ENCODE measurements at regions of chr7 and their contacts with region 1.

Region 1: DNA sequence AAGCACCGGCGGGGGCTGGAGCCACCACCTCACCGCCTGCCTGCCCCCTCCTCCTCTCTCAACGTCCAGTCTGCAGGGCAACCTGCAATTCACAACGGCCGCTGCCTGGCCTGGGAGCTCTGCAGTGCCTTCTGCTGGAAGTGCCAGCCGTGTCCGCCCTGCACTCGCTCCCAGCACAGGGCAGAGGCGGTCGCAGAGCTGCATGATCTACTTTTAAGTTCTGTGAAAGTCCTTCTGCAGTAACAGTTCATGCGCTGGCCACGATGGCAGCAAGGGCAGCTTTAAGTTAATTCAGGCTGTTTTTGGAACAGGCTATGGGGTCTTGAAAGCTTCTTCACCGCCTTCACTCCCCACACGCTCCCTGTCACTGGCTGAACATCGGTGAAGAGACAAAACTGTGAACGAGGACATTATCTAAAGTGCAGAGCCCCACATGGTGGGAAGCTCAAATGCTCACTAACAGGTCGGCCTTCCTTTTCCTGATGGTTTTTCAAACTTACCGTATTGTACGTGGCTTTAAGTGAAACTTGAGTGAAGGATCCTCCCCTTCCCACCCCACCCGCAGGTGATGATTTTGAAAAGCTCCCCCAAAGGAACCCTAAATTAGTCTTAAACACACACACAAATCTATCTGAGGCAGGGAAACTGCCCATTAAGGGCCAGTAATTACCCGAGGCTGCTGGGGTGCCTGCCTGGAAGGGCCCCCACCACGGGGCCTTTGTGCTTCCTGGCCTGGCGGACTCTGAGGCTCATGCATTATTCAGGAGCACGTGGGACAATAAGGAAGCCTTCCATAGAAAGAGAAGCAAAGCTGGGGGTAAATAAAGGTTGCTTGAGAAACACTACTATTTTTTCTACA is 504.3 kb downstream of the DNAJB6 start:
- DNase-seq: peak; percentile 36

Region 2: GRCh38 chr7:157760004-157760730 is 81.0 kb before region 1 on chr7:
- intact Hi-C with region 1: no loop called
- DNase-seq: no peak

Region 3: DNA sequence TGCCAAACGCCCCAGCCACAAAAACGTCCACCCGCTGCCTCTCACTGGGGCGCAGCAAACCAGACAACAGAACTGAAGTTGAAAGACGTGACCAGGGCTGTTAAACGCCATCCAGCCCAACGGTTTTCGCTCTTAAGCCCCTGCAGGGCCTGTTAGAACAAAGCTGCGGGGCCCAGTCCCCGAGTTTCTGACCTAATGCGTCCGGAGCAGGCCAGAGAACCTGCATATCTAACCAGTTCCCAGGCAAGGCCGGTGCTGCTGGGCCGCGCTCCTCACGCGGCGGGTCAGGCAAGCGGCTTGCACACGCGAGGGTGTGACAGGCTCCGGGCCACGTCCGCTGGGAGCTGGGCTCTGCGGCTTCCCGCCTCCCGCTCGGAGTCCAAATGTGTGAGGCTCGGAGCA is 659.5 kb after region 1 on chr7:
- intact Hi-C with region 1: loop called in 1 of 2 experiments (anchors 5 kb)
- DNase-seq: no peak

Measured in posterior vena cava (tissue), 2 donors.